Gastrocnemius medialis (tissue), 4 donors: ENCODE measurements at regions of chr2 and their contacts with region 1.

Region 1: GRCh38 chr2:65554765-65555591 is 122.6 kb upstream of the SPRED2 start:
- DNase-seq: no peak
- ATAC-seq: no peak
- H3K4me3 ChIP-seq: no peak overlapping the region
- H3K27ac ChIP-seq: no peak overlapping the region
- H3K4me1 ChIP-seq: peaks cover 0 to 5% of the 10 kb centered on the region in 2 donors
- H3K27me3 ChIP-seq: no peaks in the 10 kb centered on the region
- CTCF ChIP-seq: no peak
- POLR2A ChIP-seq: no peak

Region 2: GRCh38 chr2:65040400-65041261 is 514.3 kb before region 1 on chr2:
- in situ Hi-C with region 1: loop called in 2 of 4 experiments (anchors 25 kb)
- intact Hi-C with region 1: no loop called
- DNase-seq: peak; percentile 78 to 86
- ATAC-seq: peak; percentile 97
- H3K4me3 ChIP-seq: peak overlapping the region in 1 of 4 donors; percentile 37
- H3K27ac ChIP-seq: no peak overlapping the region
- H3K4me1 ChIP-seq: peaks cover 0 to 5% of the 10 kb centered on the region in 2 donors
- H3K27me3 ChIP-seq: no peaks in the 10 kb centered on the region
- CTCF ChIP-seq: peak; percentile 94 to 98 (median 95)
- POLR2A ChIP-seq: no peak

Region 3: GRCh38 chr2:65576861-65577601 is 22.1 kb after region 1 on chr2:
- in situ Hi-C with region 1: no loop called
- intact Hi-C with region 1: loop called (anchors 2 kb)
- DNase-seq: no peak
- ATAC-seq: no peak
- H3K4me3 ChIP-seq: no peak overlapping the region
- H3K27ac ChIP-seq: no peak overlapping the region
- H3K4me1 ChIP-seq: peaks cover 0 to 7% of the 10 kb centered on the region in 2 donors
- H3K27me3 ChIP-seq: no peaks in the 10 kb centered on the region
- CTCF ChIP-seq: no peak
- POLR2A ChIP-seq: no peak